ENCODE measurements at regions of chr9 and their contacts with region 1.

Region 1: GRCh38 chr9:94681508-94681907 is 42.2 kb upstream of the FBP1 start:
- DNase-seq: peak; percentile 74
- CTCF ChIP-seq: peak; percentile 45

Region 2: DNA sequence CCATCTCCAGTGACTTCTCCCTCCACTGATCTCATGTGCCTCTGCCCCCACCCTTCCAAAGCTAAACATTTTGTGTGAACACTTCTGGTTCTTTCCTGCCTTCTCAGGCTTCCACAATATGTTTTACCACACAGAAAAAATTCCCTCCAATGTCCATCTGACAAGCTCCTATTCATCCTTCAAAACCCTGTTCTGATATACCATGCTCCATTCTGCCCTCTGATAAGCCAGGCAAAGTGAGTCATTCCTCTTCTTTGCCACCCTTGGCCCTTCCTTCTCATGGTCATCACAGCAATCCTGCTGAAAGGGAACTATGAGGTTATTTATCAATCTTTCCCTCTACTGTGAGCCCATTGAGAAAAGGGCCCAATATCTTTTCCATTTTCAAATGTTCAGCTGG is 824.0 kb before region 1 on chr9:
- in situ Hi-C with region 1: no loop called
- DNase-seq: no peak
- CTCF ChIP-seq: no peak

Region 3: DNA sequence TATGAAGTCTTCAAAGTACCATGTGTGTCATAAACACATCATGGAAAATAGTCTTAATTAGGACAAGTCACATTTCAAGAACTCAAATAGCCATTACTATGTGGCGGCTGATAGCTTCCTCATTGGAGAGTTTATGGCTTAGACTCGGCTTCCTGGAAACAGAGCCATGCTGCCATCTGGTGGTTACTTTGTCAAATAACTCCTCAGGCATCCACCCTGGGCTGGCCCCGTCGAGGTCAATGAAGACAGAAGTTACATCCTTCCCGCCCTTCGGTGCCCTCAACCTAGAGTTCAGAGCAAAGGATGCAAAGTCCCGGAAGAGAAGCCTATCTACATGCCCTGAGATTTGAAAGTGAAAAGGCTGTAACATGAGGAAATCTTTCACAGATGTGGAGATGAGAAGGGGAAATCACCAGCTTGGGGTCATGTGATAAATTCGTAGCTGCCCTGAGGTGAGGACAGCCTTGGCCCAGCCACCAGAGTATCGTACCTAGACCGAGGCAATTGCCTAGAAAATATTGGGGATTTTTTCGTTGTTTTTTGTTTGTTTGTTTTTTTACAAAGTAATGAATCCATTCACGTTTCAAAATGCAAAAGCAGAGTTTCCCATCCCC is 467.9 kb before region 1 on chr9:
- in situ Hi-C with region 1: no loop called
- DNase-seq: peak; percentile 82
- CTCF ChIP-seq: peak; percentile 65

Region 4: DNA sequence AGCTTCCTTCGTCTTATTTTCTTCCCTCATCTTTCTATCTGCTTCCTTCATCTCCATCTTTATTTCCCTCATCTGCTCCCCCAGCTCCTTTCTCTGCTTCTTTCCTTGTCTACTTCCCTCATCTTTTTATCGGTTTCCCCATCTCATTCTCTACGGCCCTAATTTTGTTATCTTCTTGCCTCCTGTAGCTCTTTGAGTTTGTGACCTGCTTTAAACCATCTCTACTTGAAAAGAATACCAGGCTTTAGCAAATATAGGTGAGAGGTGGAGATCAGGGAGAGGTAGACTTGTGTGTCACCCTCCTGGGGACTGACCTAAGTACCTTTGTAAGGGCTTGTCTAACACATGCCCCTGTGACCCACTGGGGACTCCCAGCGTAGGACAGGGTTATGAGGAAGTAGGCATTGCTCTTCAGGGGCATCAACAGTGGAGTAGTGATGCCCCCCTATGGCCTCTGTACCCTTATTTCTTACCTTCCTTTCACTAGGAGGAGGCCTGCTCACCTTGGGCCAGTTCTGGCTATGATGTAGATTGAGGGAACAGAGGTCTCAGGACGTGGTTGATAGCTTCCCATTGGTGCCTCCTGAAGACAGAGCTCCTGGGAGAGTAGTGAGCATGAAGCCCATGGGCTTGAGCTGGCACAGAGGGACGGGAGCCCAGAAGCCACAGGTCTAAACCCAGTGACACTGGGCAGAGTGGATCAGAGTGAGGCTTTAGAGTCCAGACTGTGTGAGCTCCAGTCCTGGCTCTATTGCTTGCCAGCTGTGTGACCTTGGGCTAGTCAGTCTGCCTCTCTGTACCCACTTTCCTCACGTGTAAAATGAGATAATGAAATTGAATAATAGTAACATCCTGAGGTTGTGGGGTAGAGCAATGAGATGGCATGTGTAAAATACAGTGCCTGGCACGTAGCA is 236.6 kb after region 1 on chr9:
- in situ Hi-C with region 1: loop called (anchors 10 kb)
- DNase-seq: peak; percentile 58
- CTCF ChIP-seq: peak; percentile 8